ENCODE measurements at regions of chr1 and their contacts with region 1.

Region 1: GRCh38 chr1:91997607-91998195 is 32.1 kb upstream of the EPHX4 start:
- DNase-seq: peak; percentile 59
- H3K4me3 ChIP-seq: no peak overlapping the region
- H3K27ac ChIP-seq: no peak overlapping the region
- H3K4me1 ChIP-seq: no peaks in the 10 kb centered on the region
- H3K27me3 ChIP-seq: no peaks in the 10 kb centered on the region
- CTCF ChIP-seq: peak; percentile 48 to 51
- POLR2A ChIP-seq: no peak

Region 2: GRCh38 chr1:91900538-91900937 is 97.2 kb before region 1 on chr1:
- CTCF ChIA-PET with region 1: no interaction called
- POLR2A ChIA-PET with region 1: no interaction called
- dilution Hi-C with region 1: no loop called
- intact Hi-C with region 1: no loop called
- DNase-seq: no peak
- H3K4me3 ChIP-seq: no peak overlapping the region
- H3K27ac ChIP-seq: no peak overlapping the region
- H3K4me1 ChIP-seq: peaks cover 14% of the 10 kb centered on the region
- H3K27me3 ChIP-seq: no peaks in the 10 kb centered on the region
- CTCF ChIP-seq: no peak
- POLR2A ChIP-seq: no peak

Region 3: DNA sequence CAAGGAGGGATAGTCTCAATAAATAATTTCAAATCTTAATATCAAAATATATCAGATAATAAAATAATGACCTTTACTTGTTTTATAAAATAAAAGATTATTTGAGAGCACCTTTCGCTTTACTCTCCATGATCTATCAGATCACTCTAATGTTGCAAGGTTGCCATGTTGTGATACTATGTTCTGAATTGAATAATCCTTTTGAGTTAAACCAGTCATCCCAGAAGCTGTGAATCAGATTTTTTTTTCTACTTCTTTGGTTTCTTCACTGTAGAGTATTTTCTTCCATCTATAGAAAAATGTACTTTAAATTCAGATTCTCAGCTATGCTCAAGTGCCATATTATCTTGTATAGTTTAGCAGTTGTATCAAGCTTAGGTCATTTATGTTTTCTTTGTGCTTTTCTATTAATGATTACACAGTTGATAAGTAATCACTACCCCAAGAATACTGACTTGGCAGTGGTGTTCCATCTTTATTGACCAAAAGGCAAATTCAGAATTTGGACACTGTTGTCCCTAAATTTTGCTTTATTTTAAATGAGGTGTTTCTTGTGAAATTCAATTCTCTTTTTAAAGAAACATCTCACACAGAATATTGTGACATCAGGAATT is 15.6 kb before region 1 on chr1:
- CTCF ChIA-PET with region 1: interaction called, 26 read pairs
- POLR2A ChIA-PET with region 1: no interaction called
- dilution Hi-C with region 1: no loop called
- intact Hi-C with region 1: no loop called
- DNase-seq: no peak
- H3K4me3 ChIP-seq: no peak overlapping the region
- H3K27ac ChIP-seq: no peak overlapping the region
- H3K4me1 ChIP-seq: no peaks in the 10 kb centered on the region
- H3K27me3 ChIP-seq: no peaks in the 10 kb centered on the region
- CTCF ChIP-seq: no peak
- POLR2A ChIP-seq: no peak

Region 4: DNA sequence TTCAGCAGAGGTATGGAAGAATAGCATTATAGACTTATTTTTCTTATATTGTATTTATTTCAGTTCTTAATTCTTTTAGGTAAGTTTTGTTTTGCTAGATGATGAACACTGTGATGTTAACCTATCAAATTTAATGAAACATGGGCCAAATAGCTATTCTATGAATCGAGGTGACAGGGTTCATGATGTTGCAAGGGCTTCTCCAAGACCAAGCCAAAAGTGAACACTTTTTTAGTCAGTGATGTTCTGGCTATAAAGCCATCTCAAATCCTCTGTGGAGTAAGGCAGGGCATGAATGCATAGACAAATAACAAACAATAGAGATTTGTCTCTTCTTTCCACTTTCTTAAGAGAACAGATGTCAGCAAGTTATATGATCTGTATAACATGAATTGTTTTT is 246.7 kb after region 1 on chr1:
- CTCF ChIA-PET with region 1: interaction called, 14 read pairs
- POLR2A ChIA-PET with region 1: no interaction called
- dilution Hi-C with region 1: no loop called
- intact Hi-C with region 1: no loop called
- DNase-seq: no peak
- H3K4me3 ChIP-seq: no peak overlapping the region
- H3K27ac ChIP-seq: no peak overlapping the region
- H3K4me1 ChIP-seq: no peaks in the 10 kb centered on the region
- H3K27me3 ChIP-seq: no peaks in the 10 kb centered on the region
- CTCF ChIP-seq: no peak
- POLR2A ChIP-seq: no peak

Region 5: GRCh38 chr1:92310185-92310597 is 312.5 kb after region 1 on chr1:
- CTCF ChIA-PET with region 1: interaction called, 10 read pairs
- POLR2A ChIA-PET with region 1: no interaction called
- dilution Hi-C with region 1: no loop called
- intact Hi-C with region 1: no loop called
- DNase-seq: peak; percentile 33
- H3K4me3 ChIP-seq: no peak overlapping the region
- H3K27ac ChIP-seq: no peak overlapping the region
- H3K4me1 ChIP-seq: no peaks in the 10 kb centered on the region
- H3K27me3 ChIP-seq: no peaks in the 10 kb centered on the region
- CTCF ChIP-seq: peak; percentile 23 to 28
- POLR2A ChIP-seq: no peak

Region 6: DNA sequence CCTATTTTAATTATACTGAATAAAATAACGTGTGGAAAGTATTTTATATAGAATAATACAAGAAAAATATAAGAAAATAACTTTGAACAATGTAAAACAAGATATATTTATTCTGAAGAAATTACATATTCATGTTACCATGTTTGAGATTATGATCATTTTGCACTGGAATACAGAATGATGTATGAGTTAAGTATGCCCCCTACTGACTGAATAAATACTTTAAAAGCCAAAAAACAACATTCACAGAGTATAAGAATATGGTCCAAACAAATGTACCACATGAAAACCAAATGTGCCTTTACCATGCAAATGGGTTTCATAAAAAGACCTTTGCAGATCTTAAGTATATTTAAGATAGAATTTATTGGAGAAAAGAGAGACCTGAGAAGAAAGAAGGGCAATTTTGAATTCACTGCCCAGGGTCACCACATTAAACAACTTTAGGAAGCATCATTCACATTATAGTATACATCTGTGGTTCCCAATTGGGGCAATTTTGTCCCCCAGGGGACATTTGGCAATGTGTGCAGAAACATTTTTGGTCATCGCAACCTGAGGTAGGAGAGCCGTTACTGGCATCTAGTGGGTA is 625.6 kb after region 1 on chr1:
- CTCF ChIA-PET with region 1: interaction called, 5 read pairs
- POLR2A ChIA-PET with region 1: no interaction called
- dilution Hi-C with region 1: no loop called
- intact Hi-C with region 1: loop called (anchors 2 kb)
- DNase-seq: peak; percentile 28
- H3K4me3 ChIP-seq: no peak overlapping the region
- H3K27ac ChIP-seq: no peak overlapping the region
- H3K4me1 ChIP-seq: no peaks in the 10 kb centered on the region
- H3K27me3 ChIP-seq: no peaks in the 10 kb centered on the region
- CTCF ChIP-seq: peak in 1 of 2 donors; percentile 6
- POLR2A ChIP-seq: no peak